ENCODE measurements at regions of chr7 and their contacts with region 1.

Region 1: GRCh38 chr7:26398756-26399501 is 107.3 kb downstream of the SNX10 start:
- DNase-seq: peak; percentile 70
- H3K4me3 Mint-ChIP-seq: peak overlapping the region; percentile 86
- H3K27ac Mint-ChIP-seq: peak overlapping the region; percentile 64
- H3K4me1 Mint-ChIP-seq: peaks cover 13% of the 10 kb centered on the region
- H3K27me3 Mint-ChIP-seq: peaks cover 41% of the 10 kb centered on the region

Region 2: DNA sequence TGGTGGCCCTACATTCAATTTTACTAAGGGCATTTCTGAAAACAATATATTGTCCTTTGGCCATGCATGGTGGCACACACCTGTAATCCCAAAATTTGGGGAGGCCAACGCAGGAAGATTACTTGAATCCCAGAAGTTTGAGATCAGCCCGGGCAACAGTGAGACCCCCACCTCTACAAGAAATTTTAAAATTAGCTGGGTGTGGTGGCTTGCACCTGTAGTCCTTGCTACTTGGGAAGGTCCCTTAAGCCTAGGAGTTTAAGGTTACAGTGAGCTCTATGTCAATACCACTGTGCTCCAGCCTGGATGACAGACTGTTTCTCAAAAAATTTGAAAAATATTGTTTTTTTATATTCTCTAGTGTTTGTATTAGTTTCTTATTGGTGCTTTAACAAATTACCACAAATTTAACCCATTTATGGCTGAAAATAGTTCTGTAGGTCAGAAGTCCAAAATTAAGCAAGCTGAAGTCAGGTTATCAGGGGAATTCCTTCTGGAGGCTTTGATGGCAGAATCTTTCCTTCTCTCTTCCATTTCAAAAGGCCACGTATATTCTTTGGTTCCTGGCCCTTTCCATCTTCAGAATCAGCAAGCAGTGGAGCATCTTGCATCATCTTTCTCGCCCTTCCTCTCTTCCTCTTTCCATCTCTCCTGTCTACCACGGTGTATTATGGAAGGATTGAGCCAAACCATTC is 185.0 kb before region 1 on chr7:
- CTCF ChIA-PET with region 1: no interaction called
- POLR2A ChIA-PET with region 1: no interaction called
- intact Hi-C with region 1: no loop called
- DNase-seq: no peak
- H3K4me3 Mint-ChIP-seq: no peak overlapping the region
- H3K27ac Mint-ChIP-seq: no peak overlapping the region
- H3K4me1 Mint-ChIP-seq: peaks cover 21% of the 10 kb centered on the region
- H3K27me3 Mint-ChIP-seq: no peaks in the 10 kb centered on the region

Region 3: DNA sequence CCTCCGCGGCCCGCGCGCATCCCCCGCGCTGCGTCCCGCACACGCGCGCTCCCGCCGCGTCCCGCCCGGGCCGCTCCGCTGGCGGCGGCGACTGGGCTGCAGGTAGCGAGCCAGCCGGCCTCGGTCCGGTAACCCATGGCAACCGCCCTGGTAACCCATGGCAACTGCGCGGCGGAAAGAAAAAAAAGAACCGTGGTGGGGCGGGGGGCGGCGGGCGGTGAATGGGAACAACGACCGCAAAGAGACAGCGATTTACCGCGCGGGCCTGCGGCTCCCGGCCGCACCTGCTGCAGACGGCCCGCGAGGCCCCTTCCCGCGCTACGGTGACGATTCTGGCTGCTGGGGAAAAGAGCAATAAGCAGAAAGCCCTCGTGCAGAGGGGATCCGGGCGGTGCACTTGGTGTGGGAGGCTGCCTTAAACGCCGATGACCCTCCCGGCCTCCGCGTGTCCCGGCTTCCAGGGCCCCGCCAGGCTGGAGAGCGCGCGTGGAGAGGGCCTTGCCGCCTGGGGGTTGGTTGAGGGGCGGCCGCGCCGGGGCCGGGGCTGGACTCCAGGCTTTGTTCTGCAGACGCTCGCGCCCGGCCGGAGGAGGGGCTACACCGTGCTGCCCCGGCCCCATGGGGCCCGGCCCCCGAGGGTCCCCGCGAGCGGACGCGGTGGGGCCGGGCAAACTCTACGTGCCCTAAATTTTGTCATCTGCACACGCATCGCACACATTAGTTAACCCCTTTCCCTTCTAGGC is 22.6 kb before region 1 on chr7:
- CTCF ChIA-PET with region 1: interaction called, 9 read pairs
- POLR2A ChIA-PET with region 1: no interaction called
- intact Hi-C with region 1: loop called (anchors 1 kb)
- DNase-seq: peak; percentile 56
- H3K4me3 Mint-ChIP-seq: peak overlapping the region; percentile 73
- H3K27ac Mint-ChIP-seq: no peak overlapping the region
- H3K4me1 Mint-ChIP-seq: no peaks in the 10 kb centered on the region
- H3K27me3 Mint-ChIP-seq: peaks cover 27% of the 10 kb centered on the region

Region 4: DNA sequence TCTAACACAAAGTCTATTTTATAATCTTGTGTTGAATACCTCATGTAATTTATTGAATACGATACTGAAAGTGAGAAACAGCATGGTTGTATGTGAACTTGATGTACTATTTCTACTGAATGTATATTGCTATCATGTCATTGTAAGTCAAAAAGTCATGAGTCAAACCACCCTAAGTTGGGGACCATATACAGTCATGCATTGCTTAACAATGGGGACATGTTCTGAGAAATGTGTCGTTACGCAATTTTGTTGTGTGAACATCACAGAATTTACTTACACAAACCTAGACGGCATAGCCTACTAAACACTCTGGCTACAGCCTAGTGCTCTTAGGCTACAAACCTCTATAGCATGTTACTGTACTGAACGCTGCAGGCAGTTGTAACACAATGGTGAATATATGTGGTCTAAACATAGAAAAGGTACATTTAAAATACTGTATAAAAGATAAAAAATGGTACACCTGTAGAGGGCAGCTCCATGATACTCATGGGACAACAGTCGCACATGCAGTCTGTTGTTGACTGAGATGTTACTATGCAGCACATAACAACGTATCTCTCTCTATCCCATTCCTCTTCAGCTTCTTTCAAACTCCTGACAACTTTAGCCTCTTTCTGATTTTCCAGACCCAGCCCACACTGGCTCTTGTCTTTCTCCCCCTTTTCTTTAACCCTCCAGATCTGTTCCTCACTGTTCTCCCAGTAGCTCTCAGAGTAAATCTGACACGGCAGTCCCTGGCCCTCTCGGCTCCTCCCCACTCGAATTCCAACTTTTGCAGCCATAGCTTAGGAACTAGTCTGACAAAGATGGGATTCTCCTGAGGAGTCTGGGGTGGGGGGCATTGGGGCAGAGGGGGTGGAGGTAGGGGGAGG is 17.2 kb before region 1 on chr7:
- CTCF ChIA-PET with region 1: interaction called, 9 read pairs
- POLR2A ChIA-PET with region 1: no interaction called
- intact Hi-C with region 1: loop called (anchors 1 kb)
- DNase-seq: no peak
- H3K4me3 Mint-ChIP-seq: no peak overlapping the region
- H3K27ac Mint-ChIP-seq: no peak overlapping the region
- H3K4me1 Mint-ChIP-seq: no peaks in the 10 kb centered on the region
- H3K27me3 Mint-ChIP-seq: peaks cover 32% of the 10 kb centered on the region

Region 5: DNA sequence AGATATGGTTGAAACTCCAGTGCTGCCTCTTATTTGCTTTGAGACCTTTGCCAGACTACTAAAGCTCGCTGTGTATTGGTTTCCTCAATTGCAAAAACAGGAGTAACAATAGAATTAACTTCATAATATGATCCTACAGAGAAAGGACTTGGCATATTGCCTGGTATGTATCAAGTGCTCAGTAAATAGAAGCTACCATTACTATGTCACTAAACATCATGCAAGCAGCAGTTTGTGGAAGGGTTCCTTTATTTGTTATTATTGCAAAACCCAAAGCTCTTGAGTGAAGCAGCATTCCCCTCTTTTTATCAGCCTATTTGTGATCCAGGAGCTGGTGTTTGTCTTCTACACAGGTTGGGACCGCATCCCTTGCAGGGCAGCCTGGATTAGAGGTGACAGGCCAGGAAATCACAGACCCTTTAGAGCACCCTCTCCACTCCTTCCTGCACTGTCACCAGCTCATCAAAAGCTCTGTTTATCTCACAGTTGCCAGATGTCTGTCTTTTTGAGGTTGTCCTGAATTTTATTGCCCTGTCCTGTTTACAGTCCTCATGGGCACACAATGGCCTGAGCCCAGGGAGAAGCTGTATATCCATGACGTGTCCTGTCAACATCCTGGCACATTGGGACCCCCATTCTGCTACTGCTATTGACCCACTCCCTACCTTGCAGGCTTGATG is 14.2 kb after region 1 on chr7:
- CTCF ChIA-PET with region 1: no interaction called
- POLR2A ChIA-PET with region 1: no interaction called
- intact Hi-C with region 1: no loop called
- DNase-seq: no peak
- H3K4me3 Mint-ChIP-seq: no peak overlapping the region
- H3K27ac Mint-ChIP-seq: no peak overlapping the region
- H3K4me1 Mint-ChIP-seq: no peaks in the 10 kb centered on the region
- H3K27me3 Mint-ChIP-seq: peaks cover 18% of the 10 kb centered on the region

Measured in activated CD4-positive, alpha-beta memory T cell treated with anti-CD3 and anti-CD28 coated beads for 36 hours (primary cell).